Calu3 (cell line): ENCODE measurements at regions of chr19 and their contacts with region 1.

Region 1: GRCh38 chr19:55516878-55517620 is 19.9 kb downstream of the SBK2 start:
- DNase-seq: peak; percentile 98
- H3K4me3 Mint-ChIP-seq: peak overlapping the region; percentile 73
- H3K27ac Mint-ChIP-seq: peak overlapping the region; percentile 78
- H3K4me1 Mint-ChIP-seq: no peaks in the 10 kb centered on the region
- H3K27me3 Mint-ChIP-seq: peaks cover 24% of the 10 kb centered on the region
- CTCF ChIP-seq: peak; percentile 91

Region 2: DNA sequence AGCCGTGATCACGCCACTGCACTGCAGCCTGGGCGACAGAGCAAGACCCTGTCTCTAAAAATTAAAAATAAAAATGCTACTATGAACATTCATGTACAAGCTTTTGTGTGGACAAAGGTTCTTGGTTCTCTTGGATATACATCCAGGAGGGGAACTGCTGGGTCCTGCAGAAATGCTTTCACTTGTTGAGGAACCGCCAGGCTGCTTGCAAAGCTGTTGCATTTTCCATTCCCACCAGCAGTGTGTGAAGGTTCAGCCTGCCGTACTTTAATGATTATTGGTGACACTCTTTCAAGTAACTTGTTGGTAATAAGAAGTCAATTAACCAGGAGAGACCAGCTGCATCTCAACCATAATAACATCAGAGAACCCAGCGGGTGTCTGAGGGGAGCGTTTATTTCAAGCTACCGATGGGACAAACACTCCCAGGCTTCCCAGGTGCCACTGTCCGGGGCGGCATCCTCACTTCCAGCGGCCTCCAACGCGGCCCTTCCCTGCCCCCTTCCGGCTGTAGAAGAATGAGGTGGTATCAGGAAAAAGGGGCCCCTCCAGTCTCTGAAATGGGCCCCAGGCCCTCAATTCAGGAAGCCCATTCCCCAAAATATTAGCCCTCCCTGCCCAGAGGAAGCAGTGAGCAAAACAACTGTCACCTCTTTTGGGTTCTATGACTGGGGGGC is 384.5 kb before region 1 on chr19:
- CTCF ChIA-PET with region 1: no interaction called
- intact Hi-C with region 1: no loop called
- DNase-seq: no peak
- H3K4me3 Mint-ChIP-seq: no peak overlapping the region
- H3K27ac Mint-ChIP-seq: no peak overlapping the region
- H3K4me1 Mint-ChIP-seq: no peaks in the 10 kb centered on the region
- H3K27me3 Mint-ChIP-seq: peaks cover 22% of the 10 kb centered on the region
- CTCF ChIP-seq: no peak

Region 3: DNA sequence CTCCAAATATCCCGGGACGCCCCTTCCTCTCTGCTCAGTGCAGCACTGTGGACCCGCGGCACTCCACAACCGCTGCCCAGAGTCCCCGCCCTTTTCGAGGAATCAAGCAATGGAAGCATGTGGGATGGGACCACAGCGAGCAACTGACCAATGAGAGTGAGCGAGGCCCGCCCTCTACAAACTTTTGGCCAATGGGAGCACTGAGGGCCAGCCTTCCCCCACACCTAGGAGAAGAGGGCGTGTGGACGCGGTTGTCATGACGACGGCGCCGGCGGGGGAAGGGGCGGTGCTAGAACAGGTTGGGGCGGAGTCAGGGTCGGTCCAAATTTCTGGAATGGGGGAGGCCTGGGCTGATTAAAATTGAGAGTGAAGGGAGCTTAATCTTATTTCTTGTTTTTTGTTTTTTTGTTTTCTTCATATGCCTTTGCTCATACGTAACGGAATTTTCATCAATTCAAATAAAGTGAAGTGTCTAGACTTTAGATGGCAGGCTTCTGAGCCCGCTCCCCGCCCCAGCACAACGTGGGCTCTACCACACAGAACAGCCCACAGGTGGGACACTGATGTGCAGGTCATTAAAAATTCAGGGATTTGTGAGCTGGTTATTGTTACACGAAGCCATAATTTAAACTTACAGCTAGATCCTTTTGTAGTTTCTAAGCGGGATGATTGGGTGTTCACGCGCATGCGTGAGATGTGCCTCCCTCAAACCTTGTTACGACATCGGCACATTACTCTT is 350.4 kb before region 1 on chr19 and contains the start of gene DNAAF3:
- CTCF ChIA-PET with region 1: no interaction called
- intact Hi-C with region 1: no loop called
- DNase-seq: peak; percentile 98
- H3K4me3 Mint-ChIP-seq: peak within 1 kb of the TSS; percentile 84
- H3K27ac Mint-ChIP-seq: peak within 1 kb of the TSS; percentile 96
- H3K4me1 Mint-ChIP-seq: peaks cover 6% of the 10 kb centered on the region
- H3K27me3 Mint-ChIP-seq: peaks cover 22% of the 10 kb centered on the region
- CTCF ChIP-seq: no peak
- total RNA-seq, gene DNAAF3: 10.3 and 13.1 TPM in 2 replicates

Region 4: GRCh38 chr19:55599468-55600279 is 82.6 kb after region 1 on chr19 and contains the start of gene FIZ1:
- CTCF ChIA-PET with region 1: interaction called, 4 read pairs
- intact Hi-C with region 1: loop called (anchors 2 kb)
- DNase-seq: peak; percentile 99
- H3K4me3 Mint-ChIP-seq: peak within 1 kb of the TSS; percentile 87
- H3K27ac Mint-ChIP-seq: peak within 1 kb of the TSS; percentile 94
- H3K4me1 Mint-ChIP-seq: peaks cover 21% of the 10 kb centered on the region
- H3K27me3 Mint-ChIP-seq: no peaks in the 10 kb centered on the region
- CTCF ChIP-seq: no peak
- total RNA-seq, gene FIZ1: 18.6 and 23.0 TPM in 2 replicates

Region 5: DNA sequence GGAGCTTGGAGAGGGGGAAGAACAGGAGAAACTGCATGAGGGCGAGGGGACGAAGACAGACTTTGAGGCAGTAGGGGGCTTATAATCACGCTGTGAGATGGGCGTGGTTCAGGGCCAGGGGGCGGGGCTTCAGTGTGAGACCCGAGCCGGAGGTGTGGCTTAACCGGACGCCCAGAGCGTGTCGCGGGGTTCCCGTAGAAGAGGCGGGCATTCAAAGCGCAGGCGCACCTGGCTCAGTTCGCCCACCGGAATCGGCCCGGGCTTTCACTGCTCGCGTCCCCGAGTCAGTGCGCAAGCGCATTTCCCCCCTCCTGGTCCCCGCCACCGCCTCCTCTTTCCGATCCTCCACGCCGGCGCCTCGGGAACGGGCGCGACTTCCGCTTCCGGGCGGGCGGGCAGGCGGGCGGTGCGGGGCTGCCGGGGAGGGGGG is 88.2 kb after region 1 on chr19:
- CTCF ChIA-PET with region 1: interaction called, 15 read pairs
- intact Hi-C with region 1: loop called (anchors 1 kb)
- DNase-seq: peak; percentile 99
- H3K4me3 Mint-ChIP-seq: peak overlapping the region; percentile 86
- H3K27ac Mint-ChIP-seq: peak overlapping the region; percentile 70
- H3K4me1 Mint-ChIP-seq: peaks cover 34% of the 10 kb centered on the region
- H3K27me3 Mint-ChIP-seq: no peaks in the 10 kb centered on the region
- CTCF ChIP-seq: no peak